PC-9 (cell line): ENCODE measurements at regions of chr14 and their contacts with region 1.

Region 1: DNA sequence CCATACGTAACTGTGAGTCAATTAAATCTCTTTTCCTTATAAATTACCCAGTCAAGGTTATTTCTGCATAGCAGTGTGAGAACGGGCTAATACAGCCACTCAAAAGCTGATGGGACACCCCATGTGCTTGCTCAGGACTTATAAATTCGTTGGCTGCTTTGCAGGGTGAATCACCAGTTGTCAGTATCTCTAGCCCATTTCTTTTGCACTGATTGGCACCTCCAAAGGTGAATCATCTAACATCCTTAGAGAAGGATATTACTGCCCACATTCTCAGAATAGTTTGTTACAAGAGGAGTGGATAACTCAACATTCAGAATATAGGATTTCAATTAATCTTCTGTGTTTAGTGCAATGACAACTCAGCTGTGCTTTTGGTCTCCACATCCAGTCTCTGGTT is 601.5 kb downstream of the KCNH5 start:
- DNase-seq: no peak
- H3K4me3 ChIP-seq: no peak overlapping the region
- H3K27ac ChIP-seq: no peak overlapping the region
- H3K4me1 ChIP-seq: no peaks in the 10 kb centered on the region
- H3K27me3 ChIP-seq: no peaks in the 10 kb centered on the region
- CTCF ChIP-seq: no peak

Region 2: GRCh38 chr14:62301911-62302310 is 141.9 kb before region 1 on chr14:
- CTCF ChIA-PET with region 1: interaction called, 21 read pairs
- POLR2A ChIA-PET with region 1: no interaction called
- intact Hi-C with region 1: no loop called
- DNase-seq: no peak
- H3K4me3 ChIP-seq: no peak overlapping the region
- H3K27ac ChIP-seq: no peak overlapping the region
- H3K4me1 ChIP-seq: no peaks in the 10 kb centered on the region
- H3K27me3 ChIP-seq: peaks cover 4% of the 10 kb centered on the region; the same call in 1 of the 2 replicates
- CTCF ChIP-seq: no peak